Dendritic cell treated with granulocyte-macrophage colony-stimulating factor and Interleukin-4, amounts not matched to agents 40 ng/mL and 50 ng/mL, for 4 days (primary cell): ENCODE measurements at regions of chr7 and their contacts with region 1.

Region 1: GRCh38 chr7:118183786-118184564 is at the start of gene LSM8:
- H3K4me3 Mint-ChIP-seq: peak within 1 kb of the TSS; percentile 97
- H3K27ac Mint-ChIP-seq: peak within 1 kb of the TSS; percentile 99
- H3K4me1 Mint-ChIP-seq: peaks cover 15% of the 10 kb centered on the region
- H3K27me3 Mint-ChIP-seq: no peaks in the 10 kb centered on the region

Region 2: DNA sequence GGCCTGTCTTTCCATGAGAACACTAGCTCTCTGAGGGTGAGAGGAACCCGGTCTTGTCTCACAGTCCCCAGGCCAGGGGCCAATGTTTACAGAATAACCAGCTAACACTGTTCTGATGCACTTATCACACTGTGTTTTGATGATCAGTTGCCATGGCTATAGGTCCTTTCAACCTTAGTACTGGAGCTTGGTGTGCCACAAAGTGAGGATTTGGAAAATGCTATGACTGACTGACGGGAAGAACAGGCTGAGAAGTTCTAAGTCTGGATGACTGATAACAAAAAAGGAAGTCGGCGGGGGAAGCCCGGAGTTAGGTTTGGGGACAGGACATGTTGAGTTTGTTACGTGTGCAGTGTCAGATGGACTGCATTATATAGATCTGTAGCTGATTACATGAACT is 452.5 kb before region 1 on chr7:
- intact Hi-C with region 1: loop called (anchors 10 kb)
- H3K4me3 Mint-ChIP-seq: no peak overlapping the region
- H3K27ac Mint-ChIP-seq: peak overlapping the region; percentile 83
- H3K4me1 Mint-ChIP-seq: peaks cover 40% of the 10 kb centered on the region
- H3K27me3 Mint-ChIP-seq: peaks cover 1% of the 10 kb centered on the region

Region 3: GRCh38 chr7:120185940-120186682 is 2002.1 kb after region 1 on chr7:
- intact Hi-C with region 1: no loop called
- H3K4me3 Mint-ChIP-seq: no peak overlapping the region
- H3K27ac Mint-ChIP-seq: no peak overlapping the region
- H3K4me1 Mint-ChIP-seq: no peaks in the 10 kb centered on the region
- H3K27me3 Mint-ChIP-seq: no peaks in the 10 kb centered on the region